CD8-positive, alpha-beta T cell (primary cell): ENCODE measurements at regions of chr1 and their contacts with region 1.

Region 1: GRCh38 chr1:112715264-112716053 is at the start of gene PPM1J:
- DNase-seq: peak; percentile 90 to 97 (median 95)
- ATAC-seq: peak; percentile 82
- H3K4me3 ChIP-seq: peak within 1 kb of the TSS; percentile 52 to 67
- H3K4me3 Mint-ChIP-seq: peak within 1 kb of the TSS; percentile 90
- H3K27ac ChIP-seq: peak within 1 kb of the TSS; percentile 10 to 42
- H3K27ac Mint-ChIP-seq: peak within 1 kb of the TSS; percentile 88
- H3K4me1 ChIP-seq: peaks cover 25% of the 10 kb centered on the region
- H3K4me1 Mint-ChIP-seq: peaks cover 21% of the 10 kb centered on the region
- H3K27me3 ChIP-seq: peaks cover 0 to 10% of the 10 kb centered on the region in 2 experiments
- H3K27me3 Mint-ChIP-seq: peaks cover 12% of the 10 kb centered on the region
- CTCF ChIP-seq: no peak
- total RNA-seq, gene PPM1J: 0.57 to 0.69 TPM

Region 2: DNA sequence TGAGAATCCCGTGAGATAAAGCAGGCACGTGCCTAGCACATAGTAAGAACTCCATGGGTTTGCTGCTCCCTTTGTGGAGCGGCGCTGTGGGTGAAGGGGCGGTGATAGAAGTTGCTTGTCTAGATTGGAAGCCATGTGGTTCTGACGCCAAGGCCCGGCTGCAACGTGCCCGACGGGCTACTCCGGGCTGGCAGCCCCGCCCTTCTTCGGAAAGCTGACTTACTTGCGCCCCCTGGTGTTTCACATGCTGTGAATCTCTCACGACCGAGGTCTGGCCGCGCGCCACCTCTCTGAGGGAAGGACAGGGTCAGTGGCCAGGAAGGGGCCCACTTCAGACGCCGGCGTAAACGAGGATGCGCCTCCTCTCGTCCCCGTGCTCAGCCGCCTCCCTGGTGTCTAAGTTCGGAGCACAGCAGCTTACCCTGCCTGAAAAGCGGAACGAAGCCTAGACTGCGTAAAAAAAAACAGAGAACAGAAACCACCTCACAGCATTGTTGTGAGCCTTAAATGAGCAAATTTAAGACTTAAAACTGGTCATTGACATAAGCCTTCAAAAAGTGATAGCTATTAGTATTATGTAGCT is 249.3 kb before region 1 on chr1:
- CTCF ChIA-PET with region 1: no interaction called
- POLR2A ChIA-PET with region 1: no interaction called
- intact Hi-C with region 1: loop called in 1 of 2 experiments (anchors 1 kb)
- DNase-seq: peak; percentile 66 to 90 (median 83)
- ATAC-seq: peak; percentile 95
- H3K4me3 ChIP-seq: peak overlapping the region; percentile 31 to 42
- H3K4me3 Mint-ChIP-seq: peak overlapping the region; percentile 80
- H3K27ac ChIP-seq: no peak overlapping the region
- H3K27ac Mint-ChIP-seq: no peak overlapping the region
- H3K4me1 ChIP-seq: peaks cover 8% of the 10 kb centered on the region
- H3K4me1 Mint-ChIP-seq: peaks cover 14% of the 10 kb centered on the region
- H3K27me3 ChIP-seq: peaks cover 0 to 9% of the 10 kb centered on the region in 2 experiments
- H3K27me3 Mint-ChIP-seq: peaks cover 22% of the 10 kb centered on the region
- CTCF ChIP-seq: peak; percentile 68

Region 3: GRCh38 chr1:112729909-112730308 is 14.4 kb after region 1 on chr1:
- CTCF ChIA-PET with region 1: interaction called, 14 read pairs
- POLR2A ChIA-PET with region 1: no interaction called
- intact Hi-C with region 1: no loop called
- DNase-seq: no peak
- ATAC-seq: no peak
- H3K4me3 ChIP-seq: no peak overlapping the region
- H3K4me3 Mint-ChIP-seq: no peak overlapping the region
- H3K27ac ChIP-seq: no peak overlapping the region
- H3K27ac Mint-ChIP-seq: no peak overlapping the region
- H3K4me1 ChIP-seq: no peaks in the 10 kb centered on the region
- H3K4me1 Mint-ChIP-seq: no peaks in the 10 kb centered on the region
- H3K27me3 ChIP-seq: no peaks in the 10 kb centered on the region
- H3K27me3 Mint-ChIP-seq: peaks cover 6% of the 10 kb centered on the region
- CTCF ChIP-seq: no peak

Region 4: DNA sequence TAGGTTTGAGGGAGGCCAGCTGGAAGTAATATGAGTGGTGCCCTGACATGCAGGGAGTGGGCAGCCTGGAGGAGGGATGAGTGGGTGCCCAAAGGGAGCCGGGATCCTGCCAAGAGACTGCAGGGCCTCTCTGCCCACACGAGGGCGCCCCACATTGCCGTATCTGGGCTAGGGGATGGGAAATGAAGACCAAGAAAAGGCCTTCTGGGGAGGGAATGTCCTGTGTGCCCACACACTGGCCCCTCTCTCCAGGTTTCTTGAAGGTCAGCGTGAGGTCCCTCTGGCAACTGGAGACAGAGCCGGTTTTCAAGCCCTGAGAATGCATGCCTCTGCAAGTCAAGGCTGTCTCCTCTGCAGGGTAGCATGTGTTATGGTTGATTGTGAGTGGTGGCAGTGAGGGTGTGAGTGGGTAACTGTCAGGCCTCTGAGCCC is 93.8 kb after region 1 on chr1:
- CTCF ChIA-PET with region 1: interaction called, 36 read pairs
- POLR2A ChIA-PET with region 1: no interaction called
- intact Hi-C with region 1: loop called (anchors 1 kb)
- DNase-seq: peak; percentile 23 to 73 (median 54)
- ATAC-seq: peak; percentile 63
- H3K4me3 ChIP-seq: no peak overlapping the region
- H3K4me3 Mint-ChIP-seq: no peak overlapping the region
- H3K27ac ChIP-seq: no peak overlapping the region
- H3K27ac Mint-ChIP-seq: no peak overlapping the region
- H3K4me1 ChIP-seq: no peaks in the 10 kb centered on the region
- H3K4me1 Mint-ChIP-seq: no peaks in the 10 kb centered on the region
- H3K27me3 ChIP-seq: no peaks in the 10 kb centered on the region
- H3K27me3 Mint-ChIP-seq: peaks cover 6% of the 10 kb centered on the region
- CTCF ChIP-seq: peak; percentile 62

Region 5: GRCh38 chr1:113042285-113043143 is 327.1 kb after region 1 on chr1:
- CTCF ChIA-PET with region 1: interaction called, 7 read pairs
- POLR2A ChIA-PET with region 1: no interaction called
- intact Hi-C with region 1: loop called in 1 of 2 experiments (anchors 1 kb)
- DNase-seq: peak in 3 of 9 experiments; percentile 7 to 41 (median 29)
- ATAC-seq: no peak
- H3K4me3 ChIP-seq: no peak overlapping the region
- H3K4me3 Mint-ChIP-seq: no peak overlapping the region
- H3K27ac ChIP-seq: no peak overlapping the region
- H3K27ac Mint-ChIP-seq: peak overlapping the region; percentile 33
- H3K4me1 ChIP-seq: peaks cover 25% of the 10 kb centered on the region
- H3K4me1 Mint-ChIP-seq: peaks cover 31% of the 10 kb centered on the region
- H3K27me3 ChIP-seq: no peaks in the 10 kb centered on the region
- H3K27me3 Mint-ChIP-seq: no peaks in the 10 kb centered on the region
- CTCF ChIP-seq: no peak

Region 6: DNA sequence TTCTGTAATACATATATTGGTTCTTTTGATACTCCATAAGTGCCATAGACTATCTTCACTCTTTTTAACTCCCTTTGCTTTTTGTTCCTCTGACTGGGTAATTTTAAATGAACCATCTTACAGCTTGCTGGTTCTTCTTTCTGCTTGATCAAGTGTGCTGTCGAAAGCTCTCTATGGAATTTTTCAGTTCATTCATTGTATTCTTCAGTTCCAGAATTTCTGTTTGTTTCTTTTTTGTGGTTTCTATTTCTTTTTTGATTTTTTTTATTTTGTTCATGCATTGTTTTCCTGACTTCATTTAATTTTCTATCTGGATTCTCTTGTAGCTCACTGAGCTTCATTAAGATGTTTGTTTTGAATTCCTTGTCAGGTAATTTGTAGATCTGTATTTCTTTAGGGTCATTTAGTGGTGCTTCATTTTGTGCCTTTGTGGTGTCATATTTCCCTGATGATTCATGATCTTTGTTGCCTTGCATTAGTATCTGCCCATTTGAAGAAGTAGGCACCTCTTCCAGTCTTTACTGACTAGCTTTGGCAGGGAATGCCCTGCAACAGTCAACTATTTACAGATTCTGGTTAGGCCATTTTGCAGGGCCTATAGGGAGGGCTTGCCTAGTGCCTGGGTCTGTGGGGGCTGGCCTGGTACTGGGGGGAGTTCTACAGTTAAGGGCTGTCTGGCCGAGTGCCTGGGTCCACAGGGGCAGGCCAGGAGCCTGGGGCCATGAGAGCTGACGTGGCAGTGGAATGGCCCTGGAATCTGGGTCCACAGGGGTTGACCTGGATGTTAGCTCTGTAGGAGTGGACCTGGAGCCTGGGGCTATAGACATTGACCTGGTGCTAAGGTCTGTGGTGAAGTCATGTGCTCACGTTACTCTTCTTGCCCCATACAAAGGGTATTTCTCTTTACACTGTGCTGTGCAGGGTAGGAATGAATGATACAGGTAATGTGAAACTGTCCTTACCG is 764.5 kb after region 1 on chr1:
- CTCF ChIA-PET with region 1: no interaction called
- POLR2A ChIA-PET with region 1: no interaction called
- intact Hi-C with region 1: no loop called
- DNase-seq: no peak
- ATAC-seq: no peak
- H3K4me3 ChIP-seq: no peak overlapping the region
- H3K4me3 Mint-ChIP-seq: no peak overlapping the region
- H3K27ac ChIP-seq: no peak overlapping the region
- H3K27ac Mint-ChIP-seq: no peak overlapping the region
- H3K4me1 ChIP-seq: no peaks in the 10 kb centered on the region
- H3K4me1 Mint-ChIP-seq: no peaks in the 10 kb centered on the region
- H3K27me3 ChIP-seq: no peaks in the 10 kb centered on the region
- H3K27me3 Mint-ChIP-seq: peaks cover 2% of the 10 kb centered on the region
- CTCF ChIP-seq: no peak